OCI-LY7 (cell line): ENCODE measurements at regions of chr11 and their contacts with region 1.

Region 1: DNA sequence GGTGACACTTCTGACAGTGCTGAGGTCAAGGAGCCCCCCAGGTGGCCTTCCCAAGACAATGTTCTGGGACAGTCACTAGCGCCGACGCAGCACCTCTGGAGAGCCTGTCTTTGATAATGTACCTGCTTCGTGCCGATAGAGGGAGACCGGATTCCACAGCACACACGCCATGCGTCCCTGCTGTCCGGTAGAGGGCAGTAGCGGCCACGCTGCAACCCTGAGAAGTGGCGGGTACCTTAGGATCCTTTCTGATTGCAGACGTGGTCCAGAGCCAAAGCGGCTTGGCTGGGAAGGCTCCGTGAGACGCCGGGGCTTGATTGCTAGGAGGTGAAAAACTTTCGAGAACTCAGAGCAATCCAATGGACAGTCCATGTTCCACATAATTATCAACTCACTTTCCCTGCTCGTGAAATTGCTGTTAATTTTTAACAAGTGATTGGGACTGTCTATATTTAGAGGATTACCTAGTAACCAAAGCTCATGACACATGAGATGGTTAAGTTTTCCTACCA is 11.4 kb upstream of the BARX2 start:
- DNase-seq: peak; percentile 75
- H3K4me3 ChIP-seq: no peak overlapping the region
- H3K27ac ChIP-seq: no peak overlapping the region
- H3K4me1 ChIP-seq: no peaks in the 10 kb centered on the region
- CTCF ChIP-seq: peak; percentile 94

Region 2: DNA sequence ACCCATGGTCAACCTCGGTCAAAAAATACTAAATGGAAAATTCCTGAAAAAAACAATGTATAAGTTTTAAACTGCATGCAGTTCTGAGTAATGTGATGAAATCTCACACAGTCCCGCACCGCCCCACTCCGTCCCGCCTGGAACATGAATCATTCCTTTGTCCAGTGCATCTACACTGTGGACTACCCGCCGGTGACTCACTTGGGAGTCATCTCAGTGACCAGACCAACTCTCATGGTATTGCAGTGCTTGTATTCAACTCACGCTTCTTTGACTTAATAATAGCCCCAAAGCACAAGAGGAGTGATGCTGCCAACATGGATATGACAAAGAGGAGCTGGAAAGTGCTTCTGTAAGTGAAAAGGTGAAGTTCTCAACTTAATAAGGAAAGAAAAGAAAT is 220.9 kb before region 1 on chr11:
- CTCF ChIA-PET with region 1: no interaction called
- POLR2A ChIA-PET with region 1: no interaction called
- intact Hi-C with region 1: no loop called
- DNase-seq: no peak
- H3K4me3 ChIP-seq: no peak overlapping the region
- H3K27ac ChIP-seq: no peak overlapping the region
- H3K4me1 ChIP-seq: no peaks in the 10 kb centered on the region
- CTCF ChIP-seq: no peak

Region 3: GRCh38 chr11:129489254-129489653 is 125.1 kb after region 1 on chr11:
- CTCF ChIA-PET with region 1: no interaction called
- POLR2A ChIA-PET with region 1: no interaction called
- intact Hi-C with region 1: no loop called
- DNase-seq: no peak
- H3K4me3 ChIP-seq: no peak overlapping the region
- H3K27ac ChIP-seq: no peak overlapping the region
- H3K4me1 ChIP-seq: no peaks in the 10 kb centered on the region
- CTCF ChIP-seq: no peak

Region 4: GRCh38 chr11:129593098-129593497 is 228.9 kb after region 1 on chr11:
- CTCF ChIA-PET with region 1: no interaction called
- POLR2A ChIA-PET with region 1: no interaction called
- intact Hi-C with region 1: loop called (anchors 10 kb)
- DNase-seq: no peak
- H3K4me3 ChIP-seq: no peak overlapping the region
- H3K27ac ChIP-seq: no peak overlapping the region
- H3K4me1 ChIP-seq: no peaks in the 10 kb centered on the region
- CTCF ChIP-seq: no peak

Region 5: GRCh38 chr11:129695575-129696308 is 331.5 kb after region 1 on chr11:
- CTCF ChIA-PET with region 1: no interaction called
- POLR2A ChIA-PET with region 1: no interaction called
- intact Hi-C with region 1: loop called (anchors 5 kb)
- DNase-seq: peak; percentile 36
- H3K4me3 ChIP-seq: no peak overlapping the region
- H3K27ac ChIP-seq: no peak overlapping the region
- H3K4me1 ChIP-seq: no peaks in the 10 kb centered on the region
- CTCF ChIP-seq: peak; percentile 68

Region 6: GRCh38 chr11:129750349-129751292 is 386.4 kb after region 1 on chr11:
- CTCF ChIA-PET with region 1: no interaction called
- POLR2A ChIA-PET with region 1: no interaction called
- intact Hi-C with region 1: loop called (anchors 1 kb)
- DNase-seq: peak; percentile 75
- H3K4me3 ChIP-seq: no peak overlapping the region
- H3K27ac ChIP-seq: no peak overlapping the region
- H3K4me1 ChIP-seq: no peaks in the 10 kb centered on the region
- CTCF ChIP-seq: peak; percentile 93